Calu3 (cell line): ENCODE measurements at regions of chr1 and their contacts with region 1.

Region 1: GRCh38 chr1:145858894-145859490 is at the start of gene PIAS3:
- DNase-seq: peak; percentile 98
- H3K4me3 Mint-ChIP-seq: peak within 1 kb of the TSS; percentile 98
- H3K27ac Mint-ChIP-seq: peak within 1 kb of the TSS; percentile 84
- H3K4me1 Mint-ChIP-seq: peaks cover 9% of the 10 kb centered on the region
- H3K27me3 Mint-ChIP-seq: peaks cover 10% of the 10 kb centered on the region
- CTCF ChIP-seq: no peak
- total RNA-seq, gene PIAS3: 38.3 and 40.1 TPM in 2 replicates

Region 2: GRCh38 chr1:145765574-145765973 is 93.4 kb before region 1 on chr1:
- CTCF ChIA-PET with region 1: no interaction called
- intact Hi-C with region 1: no loop called
- DNase-seq: no peak
- H3K4me3 Mint-ChIP-seq: no peak overlapping the region
- H3K27ac Mint-ChIP-seq: no peak overlapping the region
- H3K4me1 Mint-ChIP-seq: no peaks in the 10 kb centered on the region
- H3K27me3 Mint-ChIP-seq: no peaks in the 10 kb centered on the region
- CTCF ChIP-seq: no peak

Region 3: GRCh38 chr1:145845514-145846161 is 13.4 kb before region 1 on chr1 and contains the start of gene NUDT17:
- CTCF ChIA-PET with region 1: interaction called, 51 read pairs
- intact Hi-C with region 1: no loop called
- DNase-seq: peak; percentile 87
- H3K4me3 Mint-ChIP-seq: no peak within 1 kb of the TSS
- H3K27ac Mint-ChIP-seq: no peak within 1 kb of the TSS
- H3K4me1 Mint-ChIP-seq: peaks cover 10% of the 10 kb centered on the region
- H3K27me3 Mint-ChIP-seq: no peaks in the 10 kb centered on the region
- CTCF ChIP-seq: peak; percentile 92
- total RNA-seq, gene NUDT17: 2.8 and 4.0 TPM in 2 replicates

Region 4: DNA sequence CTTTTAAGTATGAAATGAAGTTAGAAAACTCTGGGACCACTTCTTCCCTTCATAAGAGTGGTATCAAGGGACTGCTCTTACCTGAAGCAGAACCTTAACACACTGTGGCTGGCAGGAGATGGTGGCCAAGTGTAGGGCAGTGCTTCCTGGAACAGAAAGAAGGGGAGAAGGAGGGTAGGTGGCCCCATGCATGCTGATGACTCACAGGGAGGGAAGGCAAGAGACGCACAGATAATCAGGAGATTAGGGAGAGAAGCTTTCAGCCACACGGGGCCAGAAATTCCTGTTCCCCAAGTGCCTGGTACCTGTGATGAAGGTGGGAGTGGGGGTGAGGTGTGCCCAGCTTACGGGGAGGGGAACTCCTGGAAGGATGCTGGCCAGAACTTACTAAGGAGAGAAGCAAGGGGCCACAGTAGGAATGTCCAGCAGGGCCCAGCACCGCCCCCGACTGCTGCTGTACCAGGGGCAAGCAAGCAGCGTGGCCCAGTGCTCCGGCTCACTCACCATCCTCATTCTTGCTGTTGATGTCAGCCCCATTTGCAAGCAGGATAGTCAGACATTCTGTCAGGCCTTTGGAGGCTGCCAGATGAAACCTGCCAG is 19.0 kb after region 1 on chr1:
- CTCF ChIA-PET with region 1: interaction called, 10 read pairs
- intact Hi-C with region 1: no loop called
- DNase-seq: peak; percentile 68
- H3K4me3 Mint-ChIP-seq: peak overlapping the region; percentile 24
- H3K27ac Mint-ChIP-seq: peak overlapping the region; percentile 71
- H3K4me1 Mint-ChIP-seq: peaks cover 40% of the 10 kb centered on the region
- H3K27me3 Mint-ChIP-seq: peaks cover 14% of the 10 kb centered on the region
- CTCF ChIP-seq: no peak

Region 5: GRCh38 chr1:145885738-145886287 is 26.8 kb after region 1 on chr1 and contains the start of gene ANKRD35:
- CTCF ChIA-PET with region 1: interaction called, 77 read pairs
- intact Hi-C with region 1: loop called (anchors 2 kb)
- DNase-seq: peak; percentile 87
- H3K4me3 Mint-ChIP-seq: peak within 1 kb of the TSS; percentile 43
- H3K27ac Mint-ChIP-seq: no peak within 1 kb of the TSS
- H3K4me1 Mint-ChIP-seq: peaks cover 52% of the 10 kb centered on the region
- H3K27me3 Mint-ChIP-seq: peaks cover 20% of the 10 kb centered on the region
- CTCF ChIP-seq: no peak
- total RNA-seq, gene ANKRD35: 0.22 TPM in 1 of 2 replicates, not detected in the other

Region 6: DNA sequence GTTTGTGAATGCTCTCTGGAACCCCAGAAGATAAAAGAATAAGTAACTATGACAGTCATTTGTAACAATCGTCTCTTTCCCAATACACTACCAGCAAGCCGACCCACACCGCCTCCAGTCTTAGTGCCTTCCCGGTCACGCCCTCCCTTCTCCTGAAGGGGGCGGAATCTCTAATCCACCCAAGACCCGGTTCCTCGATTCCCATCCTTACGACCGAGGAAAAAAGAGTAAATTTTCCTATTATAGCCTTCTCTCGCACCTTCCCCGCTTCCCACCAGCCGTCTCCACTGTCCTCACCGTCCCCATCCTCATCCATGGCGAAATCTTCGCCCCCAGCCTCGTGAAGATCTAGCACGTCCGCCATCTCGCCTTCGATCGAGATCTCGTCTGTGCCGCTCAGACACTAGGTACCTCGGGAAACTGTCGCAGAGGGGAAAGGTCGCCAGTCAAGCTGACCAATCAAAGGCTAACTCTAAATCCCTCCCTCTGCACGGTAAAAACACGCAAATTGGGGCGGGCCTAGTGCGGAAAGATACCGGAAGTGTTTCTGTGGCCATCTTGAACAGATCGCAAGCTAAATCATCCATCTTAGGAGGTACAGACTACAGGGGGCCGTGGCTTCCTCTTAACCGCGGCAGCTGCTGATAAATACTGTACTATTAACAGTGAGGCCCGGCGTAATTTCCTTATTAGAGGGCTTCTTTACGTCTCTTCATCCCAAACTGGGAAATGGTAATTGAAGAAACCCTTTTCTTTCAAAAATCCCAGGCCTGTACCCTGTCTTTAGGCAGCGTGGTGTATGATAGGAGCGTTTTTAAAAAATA is 68.3 kb after region 1 on chr1 and contains the start of gene RBM8A:
- CTCF ChIA-PET with region 1: interaction called, 11 read pairs
- intact Hi-C with region 1: no loop called
- DNase-seq: peak; percentile 95
- H3K4me3 Mint-ChIP-seq: no peak within 1 kb of the TSS
- H3K27ac Mint-ChIP-seq: no peak within 1 kb of the TSS
- H3K4me1 Mint-ChIP-seq: peaks cover 16% of the 10 kb centered on the region
- H3K27me3 Mint-ChIP-seq: no peaks in the 10 kb centered on the region
- CTCF ChIP-seq: peak; percentile 82
- total RNA-seq, gene RBM8A: 167 and 177 TPM in 2 replicates

Region 7: GRCh38 chr1:145949219-145949618 is 90.2 kb after region 1 on chr1:
- CTCF ChIA-PET with region 1: no interaction called
- intact Hi-C with region 1: no loop called
- DNase-seq: no peak
- H3K4me3 Mint-ChIP-seq: no peak overlapping the region
- H3K27ac Mint-ChIP-seq: no peak overlapping the region
- H3K4me1 Mint-ChIP-seq: no peaks in the 10 kb centered on the region
- H3K27me3 Mint-ChIP-seq: peaks cover 5% of the 10 kb centered on the region
- CTCF ChIP-seq: no peak